H1 (cell line): ENCODE measurements at regions of chr14 and their contacts with region 1.

Region 1: GRCh38 chr14:22886500-22887259 is 3.7 kb downstream of the REM2 start:
- DNase-seq: peak in 1 of 2 experiments; percentile 87
- H3K4me3 ChIP-seq: peak overlapping the region; percentile 57 to 83 (median 65)
- H3K27ac ChIP-seq: peak overlapping the region; percentile 25
- H3K4me1 ChIP-seq: peaks cover 7 to 21% (median 12%) of the 10 kb centered on the region in 4 experiments
- H3K27me3 ChIP-seq: peaks cover 0 to 17% (median 11%) of the 10 kb centered on the region in 4 experiments; a peak in 6 of 7 replicates
- CTCF ChIP-seq: peak; percentile 17 to 35 (median 21); a peak in 3 of 4 replicates
- EP300 ChIP-seq: no peak
- POLR2A ChIP-seq: peak in 1 of 2 experiments; percentile 75; a peak in 2 of 3 replicates
- RAD21 ChIP-seq: peak in 1 of 2 experiments; percentile 6; a peak in 2 of 4 replicates

Region 2: DNA sequence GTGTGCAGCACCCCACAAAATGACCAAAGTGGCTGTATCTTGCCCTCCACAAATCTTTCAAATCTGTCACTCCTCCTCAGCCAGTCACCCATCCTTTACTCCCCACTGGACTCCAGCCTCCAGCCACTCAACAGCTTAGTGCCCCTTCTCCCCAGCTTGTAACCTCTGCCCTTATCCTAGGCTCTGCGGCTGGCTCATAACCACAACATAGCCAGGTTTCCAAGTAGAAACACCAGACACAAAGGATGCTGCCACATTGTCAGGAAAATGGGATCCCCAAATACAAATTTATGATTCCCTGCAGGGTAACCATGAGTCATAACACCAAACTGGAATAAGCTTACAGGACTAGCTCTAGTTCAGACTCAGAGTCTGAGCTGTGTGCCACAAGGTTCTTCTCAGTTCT is 105.1 kb before region 1 on chr14:
- CTCF ChIA-PET with region 1: interaction called, 10 read pairs
- POLR2A ChIA-PET with region 1: interaction called, 5 read pairs
- DNase-seq: no peak
- H3K4me3 ChIP-seq: no peak overlapping the region
- H3K27ac ChIP-seq: no peak overlapping the region
- H3K4me1 ChIP-seq: no peaks in the 10 kb centered on the region; a peak in 1 of 7 replicates
- H3K27me3 ChIP-seq: no peaks in the 10 kb centered on the region
- CTCF ChIP-seq: no peak
- EP300 ChIP-seq: no peak
- POLR2A ChIP-seq: no peak
- RAD21 ChIP-seq: no peak

Region 3: DNA sequence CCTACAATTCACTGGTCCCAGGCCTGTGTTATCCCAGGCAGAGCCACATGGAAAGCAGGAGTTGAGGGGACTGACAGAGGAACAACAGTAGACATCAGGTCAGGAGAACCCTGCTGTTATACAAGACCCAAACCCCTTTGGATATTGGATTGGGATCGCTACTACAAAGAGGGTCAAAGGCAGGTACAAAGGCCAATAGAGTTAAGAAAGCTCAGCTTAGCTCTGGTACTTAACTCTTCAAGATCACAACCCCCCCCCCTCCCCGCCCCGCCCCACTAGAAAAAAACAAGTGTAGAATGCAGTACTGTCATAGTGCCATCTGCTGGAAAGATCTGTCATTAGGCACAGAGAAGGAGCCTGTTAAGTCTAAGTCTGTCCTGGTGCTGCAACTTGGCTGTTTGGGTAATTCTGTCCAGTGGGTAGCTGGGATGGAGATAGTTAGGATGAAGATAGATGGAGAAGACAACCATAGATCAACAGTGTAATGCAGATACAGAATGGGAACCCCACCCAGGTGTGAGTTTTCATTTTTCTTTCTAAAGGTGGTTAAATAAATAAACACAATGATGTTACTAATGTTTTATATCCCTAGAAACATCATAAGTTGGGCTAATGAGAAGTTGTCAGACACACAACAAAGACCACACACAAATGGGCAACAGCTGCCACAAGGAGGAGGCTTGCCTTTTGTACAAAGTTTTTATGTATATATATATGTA is 13.6 kb after region 1 on chr14:
- CTCF ChIA-PET with region 1: interaction called, 158 read pairs
- POLR2A ChIA-PET with region 1: interaction called, 22 read pairs
- DNase-seq: peak in 1 of 2 experiments; percentile 58
- H3K4me3 ChIP-seq: 0 out of 8 replicates have a peak overlapping the region, but pooled peaks of 1 of the 4 experiments have one; percentile 13
- H3K27ac ChIP-seq: no peak overlapping the region
- H3K4me1 ChIP-seq: peaks cover 0 to 8% (median 4%) of the 10 kb centered on the region in 4 experiments; a peak in 2 of 7 replicates
- H3K27me3 ChIP-seq: peaks cover 10 to 35% (median 28%) of the 10 kb centered on the region in 4 experiments
- CTCF ChIP-seq: peak; percentile 1 to 75 (median 64)
- EP300 ChIP-seq: no peak
- POLR2A ChIP-seq: no peak
- RAD21 ChIP-seq: peak; percentile 64 to 75

Region 4: GRCh38 chr14:22973217-22974032 is 86.7 kb after region 1 on chr14:
- CTCF ChIA-PET with region 1: no interaction called
- POLR2A ChIA-PET with region 1: no interaction called
- DNase-seq: peak in 1 of 2 experiments; percentile 66
- H3K4me3 ChIP-seq: no peak overlapping the region
- H3K27ac ChIP-seq: no peak overlapping the region
- H3K4me1 ChIP-seq: peaks cover 13 to 20% (median 18%) of the 10 kb centered on the region in 4 experiments
- H3K27me3 ChIP-seq: no peaks in the 10 kb centered on the region
- CTCF ChIP-seq: peak in 2 of 3 experiments; percentile 75 to 76; a peak in 3 of 4 replicates
- EP300 ChIP-seq: no peak
- POLR2A ChIP-seq: no peak; a peak in 1 of 3 replicates
- RAD21 ChIP-seq: peak; percentile 84 to 88